Endothelial cell of umbilical vein (primary cell): ENCODE measurements at regions of chr12 and their contacts with region 1.

Region 1: GRCh38 chr12:32273712-32274111 is 125.6 kb upstream of the FGD4 start:
- DNase-seq: no peak
- H3K4me3 ChIP-seq: no peak overlapping the region
- H3K27ac ChIP-seq: no peak overlapping the region
- H3K4me1 ChIP-seq: peaks cover 19% of the 10 kb centered on the region
- H3K27me3 ChIP-seq: no peaks in the 10 kb centered on the region
- CTCF ChIP-seq: no peak
- POLR2A ChIP-seq: no peak

Region 2: DNA sequence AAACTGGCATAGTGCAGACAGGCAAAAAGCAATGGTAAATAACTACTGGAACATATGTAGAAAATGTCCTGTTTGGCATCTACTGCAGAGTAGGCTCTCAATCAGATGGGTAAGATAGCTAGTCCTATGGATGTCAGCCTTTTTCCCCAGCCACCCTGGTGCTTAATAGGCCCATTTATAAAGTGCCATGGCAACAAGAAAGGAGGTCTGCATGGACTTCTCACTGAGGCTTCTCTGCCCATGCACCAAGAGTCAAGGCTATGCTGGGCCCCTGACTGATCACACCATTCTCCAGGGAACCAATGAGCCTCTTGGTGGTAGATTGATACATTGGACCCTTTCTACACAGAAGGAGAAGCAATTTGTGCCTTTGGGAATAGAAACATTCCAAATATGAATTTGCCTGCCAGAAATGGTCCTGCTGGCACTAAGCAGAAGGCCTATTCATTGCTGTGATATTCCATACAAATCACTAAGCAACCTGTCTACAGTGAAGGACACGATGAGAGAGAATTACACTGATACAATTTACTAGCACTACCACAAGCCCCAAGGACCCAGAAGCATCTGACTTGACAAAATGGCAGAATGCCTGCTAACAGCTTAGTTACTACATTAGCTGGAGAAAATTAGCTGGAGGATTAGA is 270.7 kb before region 1 on chr12:
- CTCF ChIA-PET with region 1: no interaction called
- POLR2A ChIA-PET with region 1: no interaction called
- dilution Hi-C with region 1: no loop called
- intact Hi-C with region 1: no loop called
- DNase-seq: no peak
- H3K4me3 ChIP-seq: no peak overlapping the region
- H3K27ac ChIP-seq: no peak overlapping the region
- H3K4me1 ChIP-seq: no peaks in the 10 kb centered on the region
- H3K27me3 ChIP-seq: no peaks in the 10 kb centered on the region
- CTCF ChIP-seq: no peak
- POLR2A ChIP-seq: peak; percentile 7

Region 3: DNA sequence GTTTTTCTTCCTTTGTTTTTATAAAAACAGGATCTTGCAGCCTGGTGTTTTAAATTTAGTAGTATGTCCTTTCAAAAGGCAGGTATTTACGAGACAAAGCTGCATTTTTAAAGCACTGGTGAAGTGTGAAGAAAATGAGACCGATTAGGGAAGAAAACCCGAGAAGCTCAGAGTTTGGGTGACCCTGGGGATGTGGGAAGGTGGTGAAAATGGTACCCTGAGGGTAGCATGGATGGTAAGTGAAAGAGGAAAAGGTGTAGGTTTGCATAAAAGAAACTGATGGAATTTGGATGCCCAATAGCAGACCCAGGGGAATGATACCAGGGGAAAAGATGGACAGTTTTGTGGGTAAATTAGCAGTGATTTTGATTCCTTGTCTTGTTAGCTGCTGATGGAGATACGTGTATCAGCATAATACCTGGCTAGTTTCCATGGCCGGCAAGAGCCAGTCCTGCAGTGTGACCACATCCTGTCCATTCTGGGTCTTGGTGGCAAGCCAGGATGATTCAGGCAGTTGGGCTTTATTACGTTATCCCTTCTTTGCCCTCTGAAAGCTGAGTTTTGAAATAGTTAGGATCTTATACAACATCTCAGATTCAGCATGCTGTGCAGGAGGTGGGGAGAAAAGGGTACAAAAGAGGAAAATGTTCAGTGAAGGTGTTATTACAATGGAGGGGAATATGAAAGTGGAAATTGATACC is 158.2 kb before region 1 on chr12:
- CTCF ChIA-PET with region 1: interaction called, 3 read pairs
- POLR2A ChIA-PET with region 1: no interaction called
- dilution Hi-C with region 1: no loop called
- intact Hi-C with region 1: loop called (anchors 10 kb)
- DNase-seq: peak; percentile 97
- H3K4me3 ChIP-seq: no peak overlapping the region
- H3K27ac ChIP-seq: peak overlapping the region; percentile 59
- H3K4me1 ChIP-seq: peaks cover 24% of the 10 kb centered on the region
- H3K27me3 ChIP-seq: no peaks in the 10 kb centered on the region
- CTCF ChIP-seq: no peak
- POLR2A ChIP-seq: peak; percentile 33

Region 4: GRCh38 chr12:32322354-32322753 is 48.6 kb after region 1 on chr12:
- CTCF ChIA-PET with region 1: no interaction called
- POLR2A ChIA-PET with region 1: no interaction called
- dilution Hi-C with region 1: no loop called
- intact Hi-C with region 1: no loop called
- DNase-seq: no peak
- H3K4me3 ChIP-seq: no peak overlapping the region
- H3K27ac ChIP-seq: no peak overlapping the region
- H3K4me1 ChIP-seq: no peaks in the 10 kb centered on the region
- H3K27me3 ChIP-seq: no peaks in the 10 kb centered on the region
- CTCF ChIP-seq: no peak
- POLR2A ChIP-seq: no peak

Region 5: DNA sequence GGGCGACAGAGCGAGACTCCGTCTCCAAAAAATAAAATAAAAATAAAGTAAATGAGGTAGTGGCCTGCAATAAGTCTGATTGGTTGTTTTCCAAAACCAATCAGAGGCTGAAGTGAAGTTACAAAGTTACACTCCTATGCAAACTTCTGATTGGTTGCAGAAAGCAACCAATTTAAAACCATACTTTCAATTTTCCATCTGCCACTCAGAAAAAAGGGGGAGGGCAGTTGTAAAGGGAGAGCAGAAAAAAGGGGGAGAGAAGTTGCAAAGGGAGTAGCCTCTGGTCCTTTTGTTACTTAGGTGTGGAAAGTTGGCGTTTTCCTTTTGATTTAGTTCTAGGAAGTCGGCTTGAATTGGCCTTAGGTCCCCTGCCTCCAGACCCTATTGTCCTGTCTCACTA is 392.8 kb after region 1 on chr12:
- CTCF ChIA-PET with region 1: no interaction called
- POLR2A ChIA-PET with region 1: no interaction called
- dilution Hi-C with region 1: no loop called
- intact Hi-C with region 1: no loop called
- DNase-seq: no peak
- H3K4me3 ChIP-seq: no peak overlapping the region
- H3K27ac ChIP-seq: no peak overlapping the region
- H3K4me1 ChIP-seq: no peaks in the 10 kb centered on the region
- H3K27me3 ChIP-seq: no peaks in the 10 kb centered on the region
- CTCF ChIP-seq: no peak
- POLR2A ChIP-seq: no peak